ENCODE measurements at regions of chr21 and their contacts with region 1.

Region 1: GRCh38 chr21:31866077-31866511 is 6.7 kb upstream of the HUNK start:
- DNase-seq: peak; percentile 80
- ATAC-seq: peak; percentile 91
- H3K4me3 Mint-ChIP-seq: no peak overlapping the region
- H3K27ac Mint-ChIP-seq: no peak overlapping the region
- H3K4me1 Mint-ChIP-seq: no peaks in the 10 kb centered on the region
- H3K27me3 Mint-ChIP-seq: peaks cover 23% of the 10 kb centered on the region

Region 2: GRCh38 chr21:32257962-32258785 is 392.1 kb after region 1 on chr21:
- CTCF ChIA-PET with region 1: interaction called, 16 read pairs
- POLR2A ChIA-PET with region 1: no interaction called
- DNase-seq: peak; percentile 56
- ATAC-seq: peak; percentile 68
- H3K4me3 Mint-ChIP-seq: no peak overlapping the region
- H3K27ac Mint-ChIP-seq: no peak overlapping the region
- H3K4me1 Mint-ChIP-seq: peaks cover 1% of the 10 kb centered on the region
- H3K27me3 Mint-ChIP-seq: peaks cover 3% of the 10 kb centered on the region

Measured in activated CD8-positive, alpha-beta T cell treated with anti-CD3 and anti-CD28 coated beads, Interleukin-2, amount 10 ng/mL, durations not matched to agents 7 days and 5 days (primary cell).